Cardiac septum (tissue), 1 donor: ENCODE measurements at regions of chr4 and their contacts with region 1.

Region 1: GRCh38 chr4:173735049-173735448 is 205.0 kb upstream of the HAND2 start:
- DNase-seq: no peak

Region 2: DNA sequence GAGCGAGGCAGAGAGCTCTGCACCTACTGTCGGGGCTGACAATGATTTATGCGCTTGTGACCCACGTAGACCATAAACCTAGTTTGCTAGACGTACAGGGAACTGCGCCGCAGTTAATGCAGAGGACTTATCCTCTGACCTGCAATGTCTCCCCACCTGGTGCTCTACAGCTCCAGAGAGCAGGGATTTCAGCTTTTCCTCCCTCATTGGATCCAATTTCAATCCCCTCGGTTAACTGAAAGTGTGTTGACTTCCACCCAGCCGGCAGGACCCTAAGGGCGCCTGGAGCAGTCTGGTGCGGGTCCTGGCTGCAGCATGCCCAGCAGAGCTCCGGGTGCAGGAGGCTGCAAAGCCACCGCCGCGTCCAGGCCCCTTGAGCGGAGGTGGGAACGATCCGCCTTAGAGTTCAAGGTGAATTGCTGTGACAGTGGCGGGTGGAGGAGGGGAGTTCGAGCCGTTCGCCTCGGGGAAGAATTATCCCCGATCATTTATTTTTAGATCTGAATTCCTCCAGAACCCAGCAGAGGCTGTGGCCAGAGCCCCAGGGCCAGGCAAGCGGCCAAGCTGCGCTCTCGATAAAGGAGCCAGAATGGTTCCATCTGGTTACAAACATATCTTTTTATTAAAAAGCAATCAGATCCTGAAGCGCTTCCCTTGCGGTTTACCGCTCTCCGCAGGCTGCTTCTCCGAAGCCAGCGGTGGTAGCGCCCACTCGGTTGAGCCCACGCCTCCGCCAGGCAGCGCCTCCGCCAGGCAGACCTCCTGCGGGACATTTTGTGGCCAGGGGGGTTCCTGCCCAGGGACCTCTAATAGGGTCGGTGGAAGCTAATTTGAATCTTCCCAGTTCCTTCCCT is 482.5 kb after region 1 on chr4:
- intact Hi-C with region 1: loop called (anchors 10 kb)
- DNase-seq: peak; percentile 77